B cell (primary cell): ENCODE measurements at regions of chr21 and their contacts with region 1.

Region 1: GRCh38 chr21:35801393-35801792 is 258.9 kb downstream of the SETD4 start:
- DNase-seq: no peak
- ATAC-seq: no peak
- H3K4me3 ChIP-seq: no peak overlapping the region
- H3K4me3 Mint-ChIP-seq: no peak overlapping the region
- H3K27ac ChIP-seq: no peak overlapping the region
- H3K27ac Mint-ChIP-seq: no peak overlapping the region
- H3K4me1 ChIP-seq: no peaks in the 10 kb centered on the region
- H3K4me1 Mint-ChIP-seq: no peaks in the 10 kb centered on the region
- H3K27me3 ChIP-seq: peaks cover 0 to 7% (median 0%) of the 10 kb centered on the region in 4 experiments
- H3K27me3 Mint-ChIP-seq: peaks cover 28% of the 10 kb centered on the region
- CTCF ChIP-seq: no peak

Region 2: GRCh38 chr21:35375115-35375514 is 426.3 kb before region 1 on chr21:
- CTCF ChIA-PET with region 1: no interaction called
- POLR2A ChIA-PET with region 1: no interaction called
- intact Hi-C with region 1: loop called (anchors 10 kb)
- DNase-seq: no peak
- ATAC-seq: no peak
- H3K4me3 ChIP-seq: no peak overlapping the region
- H3K4me3 Mint-ChIP-seq: no peak overlapping the region
- H3K27ac ChIP-seq: no peak overlapping the region
- H3K27ac Mint-ChIP-seq: no peak overlapping the region
- H3K4me1 ChIP-seq: no peaks in the 10 kb centered on the region
- H3K4me1 Mint-ChIP-seq: no peaks in the 10 kb centered on the region
- H3K27me3 ChIP-seq: no peaks in the 10 kb centered on the region
- H3K27me3 Mint-ChIP-seq: no peaks in the 10 kb centered on the region
- CTCF ChIP-seq: no peak

Region 3: DNA sequence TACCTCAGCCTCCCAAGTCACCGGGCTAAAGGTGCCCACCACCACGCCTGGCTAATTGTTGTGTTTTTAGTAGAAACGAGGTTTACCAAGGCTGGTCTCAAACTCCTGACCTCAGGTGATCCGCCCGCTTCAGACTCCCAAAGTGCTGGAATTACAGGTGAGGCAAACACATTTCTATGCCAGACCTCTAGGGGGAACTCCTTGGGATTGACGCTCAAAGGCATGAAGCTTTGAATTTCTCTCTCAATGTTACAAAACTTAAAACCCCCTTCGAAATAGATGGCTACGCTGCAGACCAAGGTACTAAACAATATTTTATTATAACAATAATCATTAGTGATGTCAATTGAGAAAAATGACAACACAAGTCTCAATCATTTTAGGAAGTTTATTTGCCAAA is 71.1 kb before region 1 on chr21:
- CTCF ChIA-PET with region 1: no interaction called
- POLR2A ChIA-PET with region 1: no interaction called
- intact Hi-C with region 1: no loop called
- DNase-seq: no peak
- ATAC-seq: no peak
- H3K4me3 ChIP-seq: no peak overlapping the region
- H3K4me3 Mint-ChIP-seq: no peak overlapping the region
- H3K27ac ChIP-seq: no peak overlapping the region
- H3K27ac Mint-ChIP-seq: no peak overlapping the region
- H3K4me1 ChIP-seq: no peaks in the 10 kb centered on the region
- H3K4me1 Mint-ChIP-seq: no peaks in the 10 kb centered on the region
- H3K27me3 ChIP-seq: peaks cover 0 to 11% (median 7%) of the 10 kb centered on the region in 4 experiments
- H3K27me3 Mint-ChIP-seq: peaks cover 61% of the 10 kb centered on the region
- CTCF ChIP-seq: no peak